CD8-positive, alpha-beta memory T cell (primary cell): ENCODE measurements at regions of chr9 and their contacts with region 1.

Region 1: DNA sequence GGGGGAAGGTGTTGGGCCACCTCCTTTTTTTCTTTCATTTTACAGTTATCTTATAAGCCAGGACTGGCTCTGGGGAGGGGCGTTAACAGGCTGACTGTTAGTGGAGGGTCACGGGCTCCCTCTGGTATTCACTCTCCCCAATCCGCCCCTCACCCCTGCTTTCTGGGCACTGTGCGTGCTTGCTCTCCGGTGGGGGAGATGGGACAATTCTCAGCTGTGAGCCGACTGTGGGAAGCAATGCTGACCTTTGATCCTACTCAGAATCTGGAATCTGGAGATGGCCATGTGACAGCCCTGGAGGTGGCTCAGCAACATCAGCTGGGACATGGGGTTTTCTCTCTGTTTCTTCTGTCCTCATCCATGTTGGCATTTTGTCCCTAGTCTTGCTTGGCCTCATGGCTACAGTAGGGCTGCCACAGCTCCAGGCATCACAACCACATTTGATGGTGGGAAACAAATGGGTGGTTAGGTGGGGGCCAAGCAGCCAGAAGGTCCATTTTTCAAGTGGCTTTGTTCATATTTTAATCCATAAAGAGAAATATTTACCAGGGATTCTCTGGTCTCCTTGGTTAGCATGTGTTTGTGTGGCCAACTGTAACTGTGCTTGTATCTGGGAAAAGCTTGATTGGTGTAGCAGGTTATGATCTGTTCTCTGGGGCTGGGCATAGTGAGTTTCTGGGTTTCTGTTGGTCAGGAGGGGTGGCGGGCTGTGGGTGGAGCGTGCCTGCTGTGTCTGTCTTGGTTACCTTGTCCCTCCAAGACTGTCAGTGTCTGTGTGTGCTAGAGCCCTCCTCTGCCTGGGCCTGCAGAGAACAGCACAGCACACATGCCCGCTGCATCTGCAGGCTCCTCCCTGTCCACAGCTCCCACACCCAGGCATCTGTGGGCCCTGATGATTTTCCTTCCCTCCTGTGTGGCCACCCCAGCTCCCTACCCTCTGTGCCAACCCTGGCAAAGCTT is 12.4 kb downstream of the WNK2 start:
- DNase-seq: no peak
- H3K4me3 ChIP-seq: no peak overlapping the region
- H3K4me3 Mint-ChIP-seq: no peak overlapping the region
- H3K27ac ChIP-seq: no peak overlapping the region
- H3K27ac Mint-ChIP-seq: peak overlapping the region in 3 of 8 donors; percentile 14 to 34 (median 17)
- H3K4me1 ChIP-seq: no peaks in the 10 kb centered on the region
- H3K4me1 Mint-ChIP-seq: no peaks in the 10 kb centered on the region
- H3K27me3 ChIP-seq: no peaks in the 10 kb centered on the region
- H3K27me3 Mint-ChIP-seq: peaks cover under 1 to 7% of the 10 kb centered on the region in 2 donors

Region 2: DNA sequence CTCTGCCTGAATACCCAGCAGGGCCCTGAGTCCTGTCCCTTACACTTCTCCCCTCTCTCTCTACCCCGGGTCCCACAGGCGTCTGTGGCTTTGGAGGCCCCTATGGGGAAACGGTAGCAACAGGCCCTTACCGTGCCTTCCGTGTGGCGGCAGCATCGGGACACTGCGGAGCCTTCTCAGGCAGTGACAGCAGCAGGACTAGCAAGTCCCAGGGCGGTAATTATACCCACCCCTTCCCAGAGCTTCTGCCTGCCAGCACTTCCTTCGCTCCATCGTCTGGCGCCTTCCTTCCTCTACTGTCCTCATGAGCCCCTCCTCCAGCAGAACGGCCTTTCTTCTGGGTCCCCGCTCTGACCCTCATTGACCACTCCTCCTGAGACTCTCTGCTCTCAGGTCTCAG is 362.1 kb after region 1 on chr9:
- CTCF ChIA-PET with region 1: no interaction called
- POLR2A ChIA-PET with region 1: interaction called, 10 read pairs
- DNase-seq: no peak
- H3K4me3 ChIP-seq: no peak overlapping the region
- H3K4me3 Mint-ChIP-seq: no peak overlapping the region
- H3K27ac ChIP-seq: no peak overlapping the region
- H3K27ac Mint-ChIP-seq: peak overlapping the region in 4 of 8 donors; percentile 8 to 32 (median 23)
- H3K4me1 ChIP-seq: no peaks in the 10 kb centered on the region
- H3K4me1 Mint-ChIP-seq: no peaks in the 10 kb centered on the region
- H3K27me3 ChIP-seq: no peaks in the 10 kb centered on the region
- H3K27me3 Mint-ChIP-seq: no peaks in the 10 kb centered on the region